ENCODE measurements at regions of chr2 and their contacts with region 1.

Region 1: DNA sequence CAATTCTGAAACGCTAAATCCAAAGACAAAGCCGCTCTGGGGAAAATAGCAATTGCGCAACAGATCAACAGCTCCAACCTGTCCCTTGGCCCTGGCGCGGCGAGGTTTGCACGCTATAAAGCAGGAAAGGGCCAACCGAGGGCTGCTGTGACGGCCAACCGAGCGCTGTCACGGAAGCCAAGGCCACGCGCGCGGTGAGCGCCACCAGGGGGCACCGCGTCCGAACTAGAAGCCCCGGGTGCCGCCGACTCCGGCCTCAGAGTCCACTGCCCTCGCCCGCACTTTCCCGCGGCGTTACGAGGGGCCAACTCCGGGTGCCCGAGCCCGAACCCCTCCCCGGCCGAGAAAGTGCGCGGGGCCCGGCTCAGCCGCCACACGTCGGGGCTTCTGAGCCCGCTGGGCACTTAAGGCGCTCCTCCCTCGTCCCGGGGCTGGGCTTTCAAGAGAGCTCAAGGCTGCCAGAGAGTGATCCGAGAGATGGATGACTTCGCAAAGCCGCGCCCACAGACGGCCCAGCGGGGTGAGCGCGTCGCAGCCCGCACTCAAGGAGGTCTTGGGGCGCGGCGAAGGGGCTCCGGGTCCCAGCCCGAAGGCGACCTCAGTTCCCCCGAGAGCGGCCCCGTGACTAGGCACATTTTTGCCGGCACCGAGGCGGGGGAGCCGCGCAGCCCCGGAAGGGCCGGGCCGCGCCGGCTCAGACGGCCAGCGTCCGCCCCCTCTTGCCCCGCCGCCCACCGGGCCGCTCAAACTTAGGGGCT is 897 bp downstream of the NFE2L2 start:
- DNase-seq: peak; percentile 98
- ATAC-seq: peak; percentile 58
- H3K4me3 ChIP-seq: peak overlapping the region; percentile 81
- H3K27ac ChIP-seq: peak overlapping the region; percentile 95
- H3K4me1 ChIP-seq: peaks cover 28% of the 10 kb centered on the region
- H3K27me3 ChIP-seq: no peaks in the 10 kb centered on the region
- CTCF ChIP-seq: peak; percentile 84

Region 2: GRCh38 chr2:177212106-177212890 is 51.3 kb before region 1 on chr2 and contains the start of gene HNRNPA3:
- CTCF ChIA-PET with region 1: no interaction called
- POLR2A ChIA-PET with region 1: no interaction called
- intact Hi-C with region 1: loop called (anchors 2 kb)
- DNase-seq: peak; percentile 99
- ATAC-seq: peak; percentile 86
- H3K4me3 ChIP-seq: peak within 1 kb of the TSS; percentile 92
- H3K27ac ChIP-seq: peak within 1 kb of the TSS; percentile 88
- H3K4me1 ChIP-seq: peaks cover 16% of the 10 kb centered on the region
- H3K27me3 ChIP-seq: no peaks in the 10 kb centered on the region
- CTCF ChIP-seq: no peak; the same call in 1 of the 2 replicates
- total RNA-seq, gene HNRNPA3: 50.3 and 90.2 TPM in 2 replicates

Region 3: DNA sequence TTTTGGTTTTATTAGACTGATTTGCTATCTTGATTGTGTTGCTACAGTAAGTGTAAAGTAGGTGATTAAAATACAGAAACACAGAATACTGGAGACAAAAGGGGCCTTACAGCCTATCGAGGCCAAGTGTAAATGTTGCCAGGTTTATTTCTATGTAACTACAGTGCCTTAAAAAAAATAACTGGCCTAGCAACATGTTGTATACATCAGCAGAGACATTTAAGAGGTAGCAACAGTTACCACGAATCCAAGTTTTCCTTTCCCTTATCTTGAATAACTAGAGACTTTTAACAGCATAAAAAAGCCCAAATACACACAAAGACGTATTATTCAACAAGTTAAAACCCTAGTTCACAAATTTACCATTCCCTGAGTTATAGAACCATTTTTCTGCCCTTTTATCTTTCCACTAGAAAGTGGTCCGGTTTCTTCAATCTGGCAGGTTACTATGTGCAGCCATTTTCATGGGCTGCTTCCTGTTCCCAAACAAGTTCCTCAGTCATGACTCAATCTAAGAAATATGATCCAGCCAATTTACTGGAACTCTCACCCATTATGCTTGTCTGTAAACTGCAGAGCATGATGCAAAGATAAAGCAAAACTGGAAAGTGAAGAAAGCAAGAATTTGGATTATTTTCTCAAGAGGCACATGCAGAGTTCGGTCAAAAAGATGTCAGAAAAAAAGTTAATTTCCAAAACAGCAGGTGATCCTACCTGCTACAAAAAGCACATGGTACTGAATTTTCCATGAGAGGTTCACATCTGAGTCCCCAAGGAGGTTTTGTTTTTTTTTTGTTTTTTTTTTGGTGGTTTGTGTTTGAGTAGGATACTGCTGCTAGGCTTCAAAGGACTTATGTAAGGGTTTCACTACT is 21.3 kb before region 1 on chr2:
- CTCF ChIA-PET with region 1: no interaction called
- POLR2A ChIA-PET with region 1: interaction called, 21 read pairs
- intact Hi-C with region 1: loop called (anchors 1 kb)
- DNase-seq: peak; percentile 92
- ATAC-seq: peak; percentile 85
- H3K4me3 ChIP-seq: peak overlapping the region; percentile 61
- H3K27ac ChIP-seq: peak overlapping the region; percentile 87
- H3K4me1 ChIP-seq: peaks cover 68% of the 10 kb centered on the region
- H3K27me3 ChIP-seq: no peaks in the 10 kb centered on the region
- CTCF ChIP-seq: no peak

Region 4: GRCh38 chr2:177296040-177296439 is 32.4 kb after region 1 on chr2:
- CTCF ChIA-PET with region 1: interaction called, 6 read pairs
- POLR2A ChIA-PET with region 1: interaction called, 6 read pairs
- intact Hi-C with region 1: loop called (anchors 1 kb)
- DNase-seq: peak; percentile 57
- ATAC-seq: peak; percentile 65
- H3K4me3 ChIP-seq: no peak overlapping the region
- H3K27ac ChIP-seq: no peak overlapping the region
- H3K4me1 ChIP-seq: no peaks in the 10 kb centered on the region
- H3K27me3 ChIP-seq: no peaks in the 10 kb centered on the region
- CTCF ChIP-seq: peak; percentile 62

Region 5: GRCh38 chr2:177353187-177353478 is 89.5 kb after region 1 on chr2:
- CTCF ChIA-PET with region 1: no interaction called
- POLR2A ChIA-PET with region 1: no interaction called
- intact Hi-C with region 1: no loop called
- DNase-seq: no peak
- ATAC-seq: no peak
- H3K4me3 ChIP-seq: no peak overlapping the region
- H3K27ac ChIP-seq: no peak overlapping the region
- H3K4me1 ChIP-seq: no peaks in the 10 kb centered on the region
- H3K27me3 ChIP-seq: no peaks in the 10 kb centered on the region
- CTCF ChIP-seq: no peak

Region 6: GRCh38 chr2:177392373-177393202 is 129.0 kb after region 1 on chr2 and contains the start of gene AGPS:
- CTCF ChIA-PET with region 1: no interaction called
- POLR2A ChIA-PET with region 1: interaction called, 4 read pairs
- intact Hi-C with region 1: loop called (anchors 2 kb)
- DNase-seq: peak; percentile 77
- ATAC-seq: peak; percentile 55
- H3K4me3 ChIP-seq: peak within 1 kb of the TSS; percentile 89
- H3K27ac ChIP-seq: peak within 1 kb of the TSS; percentile 66
- H3K4me1 ChIP-seq: peaks cover 47% of the 10 kb centered on the region
- H3K27me3 ChIP-seq: no peaks in the 10 kb centered on the region
- CTCF ChIP-seq: no peak
- total RNA-seq, gene AGPS: 147 and 229 TPM in 2 replicates

Measured in PC-3 (cell line).